ENCODE measurements at regions of chr7 and their contacts with region 1.

Region 1: GRCh38 chr7:40299097-40299496 is 164.3 kb downstream of the SUGCT start:
- DNase-seq: peak; percentile 97
- H3K4me3 ChIP-seq: no peak overlapping the region
- H3K27ac ChIP-seq: peak overlapping the region; percentile 98
- H3K4me1 ChIP-seq: peaks cover 48% of the 10 kb centered on the region
- H3K27me3 ChIP-seq: no peaks in the 10 kb centered on the region
- CTCF ChIP-seq: no peak
- POLR2A ChIP-seq: no peak

Region 2: DNA sequence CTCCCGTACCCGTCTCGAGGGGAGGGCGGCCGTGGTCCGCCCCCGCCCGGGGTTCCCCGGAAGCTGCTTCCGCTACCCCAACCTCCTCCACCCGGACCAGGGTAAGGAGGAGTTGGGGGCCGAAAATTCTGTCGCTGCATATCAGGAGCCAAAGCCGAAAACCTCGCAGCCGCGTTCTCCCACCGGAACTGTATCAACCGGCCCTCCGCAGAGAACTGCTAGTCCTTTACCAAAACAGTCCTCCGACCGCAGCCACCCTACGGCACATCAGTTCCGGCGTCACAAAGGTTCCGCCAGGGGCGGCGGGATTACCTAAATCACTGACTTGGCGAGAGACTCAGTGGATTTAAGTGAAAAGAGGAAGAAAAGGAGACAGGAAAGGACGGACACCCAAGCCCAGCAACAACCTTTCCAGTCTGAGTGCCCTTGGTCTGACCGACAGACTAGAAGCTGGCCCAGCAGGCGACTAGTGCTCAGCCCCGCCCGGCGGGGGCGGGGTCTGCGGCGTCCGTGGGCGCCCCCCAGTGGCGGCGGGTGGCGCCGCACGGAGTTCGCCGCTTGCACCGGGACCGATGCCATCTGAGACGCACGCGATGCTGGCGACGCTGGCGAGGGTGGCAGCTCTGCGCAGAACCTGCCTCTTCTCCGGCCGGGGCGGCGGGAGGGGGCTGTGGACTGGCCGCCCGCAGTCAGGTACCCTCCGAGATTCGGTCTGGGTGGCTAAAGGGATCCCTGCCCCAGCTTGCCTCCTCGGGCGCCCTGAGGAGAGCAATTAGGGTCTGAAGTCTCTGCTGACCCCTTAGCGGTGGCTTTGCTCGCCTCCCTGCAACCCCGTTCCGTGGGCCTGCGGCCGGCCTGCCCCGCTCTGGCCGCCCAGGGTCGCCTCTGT is 164.4 kb before region 1 on chr7 and contains the starts of genes MPLKIP and SUGCT:
- CTCF ChIA-PET with region 1: no interaction called
- POLR2A ChIA-PET with region 1: no interaction called
- dilution Hi-C with region 1: no loop called
- intact Hi-C with region 1: loop called (anchors 2 kb)
- DNase-seq: peak; percentile 89
- H3K4me3 ChIP-seq: peak within 1 kb of the TSS; percentile 63 to 99 (median 99)
- H3K27ac ChIP-seq: peak within 1 kb of the TSS; percentile 67
- H3K4me1 ChIP-seq: peaks cover 14% of the 10 kb centered on the region
- H3K27me3 ChIP-seq: no peaks in the 10 kb centered on the region
- CTCF ChIP-seq: peak; percentile 96 to 99
- POLR2A ChIP-seq: peak; percentile 35
- total RNA-seq, gene MPLKIP: 40.5 and 40.9 TPM in 2 replicates
- total RNA-seq, gene SUGCT: 1.4 and 2.2 TPM in 2 replicates

Region 3: DNA sequence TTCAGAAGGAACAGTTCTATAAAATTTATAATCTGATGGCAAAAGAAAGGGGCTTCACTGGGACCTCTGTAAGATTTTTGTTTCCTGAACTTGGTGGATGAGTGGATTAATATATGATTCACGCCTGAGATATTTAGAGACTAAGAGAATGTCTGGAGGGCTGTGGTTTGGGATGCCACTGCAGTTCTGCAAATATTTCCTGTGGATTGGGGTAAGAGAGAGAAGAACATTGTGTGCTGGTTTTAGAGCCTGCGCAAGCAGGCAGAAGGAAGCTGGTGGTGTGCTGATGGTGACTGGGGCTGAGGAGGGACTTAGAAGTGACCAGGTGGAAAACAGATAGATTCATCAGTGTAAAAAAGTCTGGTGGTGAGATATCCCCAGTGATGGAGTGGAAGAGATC is 77.3 kb before region 1 on chr7:
- CTCF ChIA-PET with region 1: no interaction called
- POLR2A ChIA-PET with region 1: no interaction called
- dilution Hi-C with region 1: no loop called
- intact Hi-C with region 1: loop called (anchors 2 kb)
- DNase-seq: no peak
- H3K4me3 ChIP-seq: no peak overlapping the region
- H3K27ac ChIP-seq: peak overlapping the region; percentile 67
- H3K4me1 ChIP-seq: peaks cover 19% of the 10 kb centered on the region
- H3K27me3 ChIP-seq: no peaks in the 10 kb centered on the region
- CTCF ChIP-seq: no peak
- POLR2A ChIP-seq: no peak

Region 4: DNA sequence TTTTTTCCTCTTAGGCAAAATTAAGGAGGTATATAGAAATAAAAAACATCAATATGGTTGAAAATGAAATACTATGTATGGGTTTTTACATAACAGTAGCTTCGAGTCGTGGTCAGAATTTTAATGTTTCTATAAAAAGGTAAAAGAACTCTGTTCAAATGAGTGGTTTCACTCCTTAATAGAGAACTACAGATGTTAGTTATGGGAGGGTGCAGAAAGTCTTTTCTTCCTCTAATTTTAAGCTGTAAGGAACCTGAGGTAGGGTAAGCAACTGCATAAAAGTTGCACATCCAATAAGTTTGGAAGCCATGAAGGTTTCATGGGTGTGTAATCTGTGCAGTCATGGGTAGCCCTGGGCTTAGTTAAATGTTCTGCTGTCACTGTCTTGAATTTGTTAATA is 23.0 kb before region 1 on chr7:
- CTCF ChIA-PET with region 1: no interaction called
- POLR2A ChIA-PET with region 1: no interaction called
- dilution Hi-C with region 1: no loop called
- intact Hi-C with region 1: no loop called
- DNase-seq: no peak
- H3K4me3 ChIP-seq: no peak overlapping the region
- H3K27ac ChIP-seq: no peak overlapping the region
- H3K4me1 ChIP-seq: no peaks in the 10 kb centered on the region
- H3K27me3 ChIP-seq: no peaks in the 10 kb centered on the region
- CTCF ChIP-seq: no peak
- POLR2A ChIP-seq: no peak

Region 5: GRCh38 chr7:40311307-40311706 is 12.2 kb after region 1 on chr7:
- CTCF ChIA-PET with region 1: interaction called, 5 read pairs
- POLR2A ChIA-PET with region 1: no interaction called
- dilution Hi-C with region 1: no loop called
- intact Hi-C with region 1: loop called (anchors 1 kb)
- DNase-seq: peak; percentile 39
- H3K4me3 ChIP-seq: no peak overlapping the region
- H3K27ac ChIP-seq: peak overlapping the region; percentile 71
- H3K4me1 ChIP-seq: peaks cover 34% of the 10 kb centered on the region
- H3K27me3 ChIP-seq: no peaks in the 10 kb centered on the region
- CTCF ChIP-seq: no peak
- POLR2A ChIP-seq: no peak

Region 6: GRCh38 chr7:40329601-40330153 is 30.6 kb after region 1 on chr7:
- CTCF ChIA-PET with region 1: no interaction called
- POLR2A ChIA-PET with region 1: no interaction called
- dilution Hi-C with region 1: no loop called
- intact Hi-C with region 1: loop called (anchors 2 kb)
- DNase-seq: peak; percentile 72
- H3K4me3 ChIP-seq: no peak overlapping the region
- H3K27ac ChIP-seq: no peak overlapping the region
- H3K4me1 ChIP-seq: peaks cover 2% of the 10 kb centered on the region
- H3K27me3 ChIP-seq: no peaks in the 10 kb centered on the region
- CTCF ChIP-seq: peak; percentile 42 to 47
- POLR2A ChIP-seq: no peak

Region 7: DNA sequence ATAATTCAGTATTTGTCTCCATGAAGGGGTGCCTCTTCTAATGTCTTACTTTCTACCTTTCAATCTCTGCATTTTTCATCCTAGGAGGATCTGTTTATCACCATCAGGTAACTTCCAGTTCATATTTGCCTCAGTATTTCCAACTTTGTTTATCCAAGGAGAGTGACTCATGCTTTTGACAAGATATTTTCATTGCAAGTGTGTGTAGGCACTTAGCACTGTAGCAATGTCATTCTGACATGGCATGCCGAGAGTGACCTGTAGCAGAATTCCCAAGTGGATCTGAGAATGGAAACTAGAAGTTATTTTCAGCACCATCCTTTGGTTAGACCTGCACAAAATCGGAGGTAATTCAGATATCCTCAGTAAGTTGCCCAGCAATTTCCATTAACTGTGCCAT is 1273.9 kb after region 1 on chr7:
- CTCF ChIA-PET with region 1: no interaction called
- POLR2A ChIA-PET with region 1: no interaction called
- dilution Hi-C with region 1: no loop called
- intact Hi-C with region 1: loop called (anchors 1 kb)
- DNase-seq: peak; percentile 84
- H3K4me3 ChIP-seq: no peak overlapping the region
- H3K27ac ChIP-seq: peak overlapping the region; percentile 96
- H3K4me1 ChIP-seq: peaks cover 48% of the 10 kb centered on the region
- H3K27me3 ChIP-seq: no peaks in the 10 kb centered on the region
- CTCF ChIP-seq: no peak
- POLR2A ChIP-seq: peak; percentile 33